Heart left ventricle (tissue), 16 donors: ENCODE measurements at regions of chr1 and their contacts with region 1.

Region 1: GRCh38 chr1:236113324-236114032 is 28.9 kb upstream of the GPR137B start:
- DNase-seq: peak in 3 of 5 donors; percentile 41 to 73 (median 58)
- ATAC-seq: peak; percentile 72 to 89 (median 86)
- H3K4me3 ChIP-seq: no peak overlapping the region
- H3K27ac ChIP-seq: peak overlapping the region; percentile 45 to 84 (median 72)
- H3K4me1 ChIP-seq: peaks cover 0 to 16% (median 0%) of the 10 kb centered on the region in 12 donors
- H3K27me3 ChIP-seq: no peaks in the 10 kb centered on the region
- CTCF ChIP-seq: no peak
- POLR2A ChIP-seq: no peak

Region 2: DNA sequence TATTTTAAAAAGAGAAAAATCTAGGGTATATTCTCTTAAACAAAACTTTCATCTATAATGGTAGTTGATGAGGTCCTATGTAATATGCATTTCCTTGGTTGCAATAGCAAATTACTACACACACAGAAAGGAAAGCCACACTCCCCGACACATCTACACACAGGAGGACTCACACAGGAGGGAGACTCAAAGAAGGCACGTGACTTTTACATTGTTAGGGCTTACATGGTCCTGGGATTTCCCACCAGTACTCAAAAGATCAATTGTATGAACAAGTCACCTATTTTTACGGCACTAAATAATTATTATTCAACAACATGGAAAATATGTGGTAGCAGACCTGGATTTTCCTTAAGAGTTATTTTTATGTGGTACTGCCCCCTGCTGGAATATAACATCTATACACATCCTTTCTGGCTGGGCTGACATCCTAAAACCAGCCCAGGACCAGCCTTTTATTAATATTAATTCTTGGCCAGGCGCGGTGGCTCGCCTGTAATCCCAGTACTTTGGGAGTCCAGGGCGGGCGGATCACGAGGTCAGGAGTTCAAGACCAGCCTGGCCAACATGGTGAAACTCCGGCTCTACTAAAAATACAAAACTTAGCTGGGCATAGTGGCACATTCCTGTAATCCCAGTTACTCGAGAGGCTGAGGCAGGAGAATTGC is 376.4 kb after region 1 on chr1:
- intact Hi-C with region 1: loop called in 9 of 10 experiments (anchors 1 to 5 kb)
- DNase-seq: peak in 1 of 5 donors; percentile 21
- ATAC-seq: peak in 3 of 4 donors; percentile 57 to 77 (median 61)
- H3K4me3 ChIP-seq: peak overlapping the region in 1 of 12 donors; percentile 31
- H3K27ac ChIP-seq: peak overlapping the region in 1 of 12 donors; percentile 42
- H3K4me1 ChIP-seq: peaks cover 0 to 16% (median 2%) of the 10 kb centered on the region in 12 donors
- H3K27me3 ChIP-seq: no peaks in the 10 kb centered on the region
- CTCF ChIP-seq: peak; percentile 43 to 71 (median 63)
- POLR2A ChIP-seq: no peak